ENCODE measurements at regions of chr1 and their contacts with region 1.

Region 1: DNA sequence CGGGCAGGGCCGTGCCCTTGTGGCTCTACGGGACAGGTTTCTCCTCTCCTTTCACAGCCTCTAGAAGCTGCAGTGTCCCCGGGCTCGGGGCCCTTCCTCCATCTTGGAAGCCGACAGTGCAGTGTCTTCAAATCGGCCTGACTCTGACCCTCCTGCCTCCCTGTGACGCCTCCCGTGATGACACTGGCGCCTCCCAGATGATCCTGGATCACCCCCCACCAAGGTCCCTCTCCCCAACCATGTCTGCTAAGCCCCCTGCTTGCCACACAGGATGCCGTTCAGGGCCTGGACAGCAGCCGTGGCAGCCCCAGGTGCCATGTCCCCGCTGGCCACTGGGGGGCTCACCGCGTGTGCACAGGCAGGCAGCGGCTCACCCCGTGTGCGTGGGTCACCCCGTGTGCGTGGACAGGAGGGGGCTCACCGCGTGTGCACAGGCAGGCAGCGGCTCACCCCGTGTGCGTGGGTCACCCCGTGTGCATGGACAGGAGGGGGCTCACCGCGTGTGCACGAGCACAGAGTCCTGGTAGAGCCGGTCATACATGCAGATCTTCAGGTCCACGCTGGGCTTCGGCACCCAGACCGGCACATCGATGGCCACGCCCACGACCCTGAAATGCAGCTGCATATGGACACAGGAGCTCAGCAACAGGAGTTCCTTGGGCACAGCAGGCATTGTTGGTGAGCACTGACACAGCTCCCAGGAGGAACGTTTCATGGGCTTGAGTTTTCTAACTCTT is 24.9 kb upstream of the TMEM52 start:
- DNase-seq: peak; percentile 35 to 75 (median 45)
- H3K4me3 ChIP-seq: no peak overlapping the region
- H3K27ac ChIP-seq: no peak overlapping the region
- H3K4me1 ChIP-seq: peaks cover 3% of the 10 kb centered on the region
- H3K27me3 ChIP-seq: no peaks in the 10 kb centered on the region
- CTCF ChIP-seq: peak; percentile 50 to 73 (median 70)
- EP300 ChIP-seq: no peak
- POLR2A ChIP-seq: no peak

Region 2: GRCh38 chr1:2025534-2025981 is 81.6 kb after region 1 on chr1:
- intact Hi-C with region 1: loop called in 1 of 4 experiments (anchors 5 kb)
- DNase-seq: peak; percentile 54 to 83 (median 59)
- H3K4me3 ChIP-seq: no peak overlapping the region
- H3K27ac ChIP-seq: no peak overlapping the region
- H3K4me1 ChIP-seq: peaks cover 4% of the 10 kb centered on the region
- H3K27me3 ChIP-seq: no peaks in the 10 kb centered on the region
- CTCF ChIP-seq: no peak
- EP300 ChIP-seq: no peak
- POLR2A ChIP-seq: no peak

Region 3: GRCh38 chr1:2044510-2045319 is 100.7 kb after region 1 on chr1:
- intact Hi-C with region 1: loop called (anchors 5 kb)
- DNase-seq: peak; percentile 55 to 85 (median 67)
- H3K4me3 ChIP-seq: no peak overlapping the region
- H3K27ac ChIP-seq: no peak overlapping the region
- H3K4me1 ChIP-seq: peaks cover 1% of the 10 kb centered on the region
- H3K27me3 ChIP-seq: no peaks in the 10 kb centered on the region
- CTCF ChIP-seq: peak; percentile 41 to 94 (median 89)
- EP300 ChIP-seq: no peak
- POLR2A ChIP-seq: no peak

Region 4: GRCh38 chr1:2163205-2163604 is 219.2 kb after region 1 on chr1:
- intact Hi-C with region 1: loop called in 1 of 4 experiments (anchors 10 kb)
- DNase-seq: no peak
- H3K4me3 ChIP-seq: no peak overlapping the region
- H3K27ac ChIP-seq: no peak overlapping the region
- H3K4me1 ChIP-seq: no peaks in the 10 kb centered on the region
- H3K27me3 ChIP-seq: no peaks in the 10 kb centered on the region
- CTCF ChIP-seq: no peak
- EP300 ChIP-seq: no peak
- POLR2A ChIP-seq: no peak

Region 5: DNA sequence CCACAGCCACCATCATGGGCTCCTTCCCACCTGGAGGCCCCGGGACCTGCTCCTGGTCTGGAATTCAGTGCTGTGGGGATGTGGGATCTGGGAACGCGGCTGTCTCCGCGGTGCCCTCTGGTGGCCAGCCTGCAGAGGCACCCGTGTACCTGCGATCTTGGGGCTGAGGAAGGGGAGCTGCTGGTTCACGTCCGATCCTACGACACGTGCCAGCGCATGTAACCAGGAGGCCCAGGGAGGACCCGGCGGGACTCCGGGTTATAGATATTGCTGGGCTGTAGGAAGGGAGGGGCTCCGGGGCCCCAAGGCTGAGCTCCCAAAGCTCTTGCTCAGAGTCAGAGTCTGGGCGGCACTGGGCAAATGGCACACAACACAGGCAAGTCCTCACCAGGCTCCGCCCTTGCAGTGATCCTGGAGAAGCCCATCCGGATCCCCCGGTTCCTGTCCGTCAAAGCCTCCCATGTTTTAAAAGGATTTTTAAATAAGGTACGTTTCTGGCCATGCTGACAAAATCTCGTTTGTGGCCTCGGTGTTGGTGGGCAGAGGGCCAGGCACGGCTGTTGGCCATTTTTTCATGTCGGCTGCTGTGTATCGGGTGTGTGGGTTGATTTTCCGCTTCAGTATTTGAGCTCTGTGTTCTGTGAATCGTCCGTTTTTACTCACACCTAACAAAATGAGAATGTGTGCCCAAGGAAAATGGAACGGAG is 230.5 kb after region 1 on chr1:
- intact Hi-C with region 1: loop called in 2 of 4 experiments (anchors 10 kb)
- DNase-seq: peak; percentile 66 to 80 (median 76)
- H3K4me3 ChIP-seq: peak overlapping the region; percentile 20
- H3K27ac ChIP-seq: peak overlapping the region in 1 of 2 donors; percentile 6
- H3K4me1 ChIP-seq: peaks cover 9% of the 10 kb centered on the region
- H3K27me3 ChIP-seq: no peaks in the 10 kb centered on the region
- CTCF ChIP-seq: peak; percentile 74 to 94 (median 86)
- EP300 ChIP-seq: no peak
- POLR2A ChIP-seq: no peak

Measured in ovary (tissue), 10 donors.